Left cardiac atrium (tissue), 4 donors: ENCODE measurements at regions of chr21 and their contacts with region 1.

Region 1: DNA sequence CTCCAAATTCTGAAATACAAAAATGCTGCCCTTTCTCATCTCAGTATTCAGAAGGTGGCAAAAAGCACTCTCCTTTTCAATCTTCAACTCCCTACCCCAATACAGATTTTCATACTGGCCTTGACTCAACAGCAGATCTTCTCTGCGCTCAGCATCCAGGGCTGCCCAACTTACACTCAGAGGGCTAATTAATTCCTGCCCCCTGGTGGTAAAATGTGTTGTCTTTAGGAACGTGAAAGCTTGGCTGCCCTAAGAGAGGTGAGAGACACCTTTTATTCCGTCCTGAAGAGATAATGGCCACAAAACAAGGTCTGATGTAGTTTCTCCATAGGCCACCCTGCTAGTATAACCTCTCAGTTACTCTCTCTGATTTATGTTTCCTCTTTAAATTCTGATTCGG is 25.0 kb downstream of the KRTAP24-1 start:
- DNase-seq: no peak
- ATAC-seq: peak in 1 of 2 donors; percentile 50

Region 2: DNA sequence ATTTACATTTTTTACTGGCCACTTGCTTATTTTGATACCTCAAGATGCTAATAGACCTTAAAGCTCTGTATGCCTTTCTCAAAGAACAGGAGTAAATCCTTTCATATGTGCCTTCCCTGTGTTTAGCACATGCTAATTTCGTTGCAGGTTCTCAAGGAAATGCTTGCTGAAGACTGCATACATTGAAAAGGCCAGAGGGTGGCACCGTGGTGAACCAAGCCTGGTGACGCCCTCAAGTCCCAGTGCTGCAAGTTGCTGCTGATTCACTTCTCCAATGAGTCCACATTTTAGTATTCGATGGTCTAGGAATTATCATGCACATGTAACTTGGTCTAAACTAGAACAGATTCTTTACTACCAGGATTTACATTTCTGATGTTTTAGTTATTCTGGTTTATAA is 185.3 kb before region 1 on chr21:
- intact Hi-C with region 1: loop called in 1 of 2 experiments (anchors 5 kb)
- DNase-seq: no peak
- ATAC-seq: peak in 1 of 2 donors; percentile 51

Region 3: GRCh38 chr21:30146558-30147302 is 111.0 kb before region 1 on chr21:
- intact Hi-C with region 1: no loop called
- DNase-seq: no peak
- ATAC-seq: no peak